ENCODE measurements at regions of chr3 and their contacts with region 1.

Region 1: GRCh38 chr3:151838583-151839312 is 24.8 kb downstream of the AADAC start:
- DNase-seq: peak; percentile 74
- H3K4me3 ChIP-seq: no peak overlapping the region
- H3K27ac ChIP-seq: no peak overlapping the region
- H3K4me1 ChIP-seq: peaks cover 21% of the 10 kb centered on the region
- H3K27me3 ChIP-seq: no peaks in the 10 kb centered on the region
- CTCF ChIP-seq: peak; percentile 62 to 65
- POLR2A ChIP-seq: no peak

Region 2: GRCh38 chr3:151227807-151228665 is 610.7 kb before region 1 on chr3:
- CTCF ChIA-PET with region 1: interaction called, 24 read pairs
- POLR2A ChIA-PET with region 1: no interaction called
- dilution Hi-C with region 1: no loop called
- intact Hi-C with region 1: loop called (anchors 1 kb)
- DNase-seq: peak; percentile 79
- H3K4me3 ChIP-seq: no peak overlapping the region
- H3K27ac ChIP-seq: peak overlapping the region; percentile 40
- H3K4me1 ChIP-seq: peaks cover 11% of the 10 kb centered on the region
- H3K27me3 ChIP-seq: no peaks in the 10 kb centered on the region
- CTCF ChIP-seq: peak; percentile 87 to 88
- POLR2A ChIP-seq: no peak

Region 3: DNA sequence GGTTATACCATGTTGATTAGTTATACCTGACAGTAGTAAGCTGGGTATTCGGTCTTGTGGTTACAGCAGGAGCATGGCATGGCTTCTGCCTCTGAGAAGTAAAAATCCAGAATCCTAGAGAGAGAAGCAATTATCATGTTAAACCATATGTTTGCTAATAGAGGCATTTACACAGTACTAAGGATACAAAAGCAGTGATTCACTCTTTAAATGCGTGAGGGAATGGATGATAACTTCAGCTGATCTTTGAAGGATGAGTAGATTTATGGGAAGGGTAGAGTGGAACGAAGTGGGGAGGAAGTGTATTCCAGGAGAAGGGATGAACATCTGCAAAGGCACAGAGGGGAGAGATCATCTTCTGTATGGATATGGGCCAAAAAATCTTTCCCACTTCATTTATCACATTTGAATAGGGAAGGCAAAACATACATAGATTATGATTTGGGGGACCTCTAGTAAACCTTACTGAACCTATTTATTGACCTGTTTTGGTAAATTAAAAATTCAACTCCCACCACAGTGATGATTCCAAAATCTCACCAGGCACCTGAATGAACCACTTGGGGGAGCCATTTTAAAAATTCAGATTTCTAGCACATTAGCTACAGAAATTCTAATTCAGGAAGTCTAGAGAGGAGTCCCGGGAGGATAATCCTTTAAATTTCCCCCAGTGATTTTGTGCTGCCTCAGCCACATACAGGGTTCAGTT is 413.0 kb before region 1 on chr3:
- CTCF ChIA-PET with region 1: interaction called, 15 read pairs
- POLR2A ChIA-PET with region 1: no interaction called
- dilution Hi-C with region 1: no loop called
- intact Hi-C with region 1: no loop called
- DNase-seq: no peak
- H3K4me3 ChIP-seq: no peak overlapping the region
- H3K27ac ChIP-seq: no peak overlapping the region
- H3K4me1 ChIP-seq: no peaks in the 10 kb centered on the region
- H3K27me3 ChIP-seq: no peaks in the 10 kb centered on the region
- CTCF ChIP-seq: peak in 1 of 2 donors; percentile 11
- POLR2A ChIP-seq: no peak

Region 4: GRCh38 chr3:151526757-151527156 is 312.0 kb before region 1 on chr3:
- CTCF ChIA-PET with region 1: no interaction called
- POLR2A ChIA-PET with region 1: no interaction called
- dilution Hi-C with region 1: no loop called
- intact Hi-C with region 1: no loop called
- DNase-seq: no peak
- H3K4me3 ChIP-seq: no peak overlapping the region
- H3K27ac ChIP-seq: no peak overlapping the region
- H3K4me1 ChIP-seq: no peaks in the 10 kb centered on the region
- H3K27me3 ChIP-seq: no peaks in the 10 kb centered on the region
- CTCF ChIP-seq: no peak
- POLR2A ChIP-seq: no peak

Region 5: DNA sequence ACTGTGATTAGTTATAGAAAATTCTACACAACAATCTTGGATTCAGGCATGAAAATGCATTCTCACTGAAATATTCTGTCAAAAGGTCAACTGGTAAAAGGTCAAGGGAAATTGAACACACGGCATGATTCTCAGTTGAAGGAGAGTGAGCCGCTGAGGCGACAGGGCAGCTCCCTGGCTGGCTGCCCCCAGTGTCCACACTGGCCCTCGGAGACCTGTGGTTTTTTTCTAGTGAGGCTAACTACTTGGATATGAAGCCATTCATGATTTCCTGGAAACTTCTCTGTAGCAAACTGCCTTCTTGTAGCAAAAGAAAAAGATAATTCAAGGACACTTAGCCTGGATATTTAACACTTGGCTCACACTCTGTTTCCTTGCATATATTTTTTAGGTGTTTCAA is 67.8 kb before region 1 on chr3:
- CTCF ChIA-PET with region 1: interaction called, 8 read pairs
- POLR2A ChIA-PET with region 1: no interaction called
- dilution Hi-C with region 1: no loop called
- intact Hi-C with region 1: loop called (anchors 2 kb)
- DNase-seq: peak; percentile 79
- H3K4me3 ChIP-seq: peak overlapping the region in 1 of 3 experiments; percentile 16
- H3K27ac ChIP-seq: peak overlapping the region; percentile 80
- H3K4me1 ChIP-seq: peaks cover 53% of the 10 kb centered on the region
- H3K27me3 ChIP-seq: no peaks in the 10 kb centered on the region
- CTCF ChIP-seq: no peak
- POLR2A ChIP-seq: no peak

Region 6: GRCh38 chr3:151918253-151919029 is 79.7 kb after region 1 on chr3:
- CTCF ChIA-PET with region 1: interaction called, 30 read pairs
- POLR2A ChIA-PET with region 1: no interaction called
- dilution Hi-C with region 1: no loop called
- intact Hi-C with region 1: loop called (anchors 1 kb)
- DNase-seq: peak; percentile 72
- H3K4me3 ChIP-seq: no peak overlapping the region
- H3K27ac ChIP-seq: peak overlapping the region; percentile 14
- H3K4me1 ChIP-seq: peaks cover under 1% of the 10 kb centered on the region
- H3K27me3 ChIP-seq: no peaks in the 10 kb centered on the region
- CTCF ChIP-seq: peak; percentile 34 to 43
- POLR2A ChIP-seq: no peak

Region 7: GRCh38 chr3:152121292-152121654 is 282.5 kb after region 1 on chr3:
- CTCF ChIA-PET with region 1: no interaction called
- POLR2A ChIA-PET with region 1: no interaction called
- dilution Hi-C with region 1: no loop called
- intact Hi-C with region 1: no loop called
- DNase-seq: peak; percentile 56
- H3K4me3 ChIP-seq: peak overlapping the region in 1 of 3 experiments; percentile 27
- H3K27ac ChIP-seq: peak overlapping the region; percentile 68
- H3K4me1 ChIP-seq: peaks cover 18% of the 10 kb centered on the region
- H3K27me3 ChIP-seq: no peaks in the 10 kb centered on the region
- CTCF ChIP-seq: no peak
- POLR2A ChIP-seq: no peak

Measured in endothelial cell of umbilical vein (primary cell).